Sigmoid colon (tissue), 7 donors: ENCODE measurements at regions of chr18 and their contacts with region 1.

Region 1: GRCh38 chr18:9708057-9708433 is at the start of gene RAB31:
- DNase-seq: peak; percentile 94
- H3K4me3 ChIP-seq: peak within 1 kb of the TSS; percentile 82 to 98 (median 88)
- H3K27ac ChIP-seq: peak within 1 kb of the TSS; percentile 93 to 98 (median 94)
- H3K4me1 ChIP-seq: peaks cover 0 to 49% (median 31%) of the 10 kb centered on the region in 4 donors
- H3K27me3 ChIP-seq: no peaks in the 10 kb centered on the region
- CTCF ChIP-seq: no peak
- EP300 ChIP-seq: no peak
- POLR2A ChIP-seq: no peak
- total RNA-seq, gene RAB31: 52.0 to 74.6 (median 65.9) TPM

Region 2: GRCh38 chr18:9771261-9771976 is 63.4 kb after region 1 on chr18:
- intact Hi-C with region 1: loop called (anchors 5 kb)
- DNase-seq: peak; percentile 90
- H3K4me3 ChIP-seq: no peak overlapping the region
- H3K27ac ChIP-seq: peak overlapping the region in 3 of 4 donors; percentile 18 to 57 (median 19)
- H3K4me1 ChIP-seq: peaks cover 0 to 37% (median 12%) of the 10 kb centered on the region in 4 donors
- H3K27me3 ChIP-seq: no peaks in the 10 kb centered on the region
- CTCF ChIP-seq: peak; percentile 83 to 96 (median 93)
- EP300 ChIP-seq: peak in 1 of 4 donors; percentile 68
- POLR2A ChIP-seq: no peak

Region 3: DNA sequence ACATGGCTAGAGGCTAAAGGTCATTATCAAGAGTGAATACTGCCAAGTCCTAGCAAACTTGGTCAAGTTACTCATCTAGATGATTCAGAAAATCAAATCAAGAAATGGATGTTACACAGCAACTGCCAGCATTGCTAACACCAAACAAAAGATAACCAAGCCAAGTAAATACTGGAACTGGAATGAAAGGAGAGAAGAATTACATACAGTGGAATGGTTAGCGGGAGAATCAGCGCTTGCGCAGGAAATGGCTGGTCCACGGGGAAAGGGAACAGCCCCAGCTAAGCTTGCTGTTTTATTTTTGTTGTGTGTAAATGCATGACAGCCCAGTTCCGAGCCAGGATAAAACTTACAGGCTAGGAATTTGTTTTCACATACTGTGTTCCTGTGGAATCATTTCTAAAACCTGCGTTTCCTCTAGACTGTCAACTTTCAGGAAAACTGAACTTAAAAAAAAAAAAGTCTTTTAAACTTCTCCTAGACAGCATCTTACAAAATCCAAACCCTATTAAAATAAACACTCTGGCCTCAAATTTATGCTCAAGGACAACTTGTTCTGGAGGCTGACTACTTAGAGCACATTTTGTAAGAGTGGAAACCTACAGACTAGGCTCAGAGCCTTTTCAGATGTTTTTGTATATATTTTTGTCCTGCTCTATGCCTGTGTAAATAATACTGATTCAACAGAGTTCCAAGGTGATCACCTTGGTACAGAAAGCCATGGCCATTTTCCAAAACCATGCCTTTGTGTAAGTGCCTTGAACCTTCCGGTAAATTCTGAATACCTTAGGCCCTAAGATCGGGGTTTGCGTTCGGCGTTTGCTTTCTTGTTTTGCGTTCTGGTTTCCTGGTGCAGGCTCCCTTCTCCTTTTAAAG is 147.0 kb after region 1 on chr18:
- intact Hi-C with region 1: loop called (anchors 2 kb)
- DNase-seq: peak; percentile 87
- H3K4me3 ChIP-seq: peak overlapping the region in 2 of 4 donors; percentile 5 to 20
- H3K27ac ChIP-seq: peak overlapping the region; percentile 78 to 89 (median 86)
- H3K4me1 ChIP-seq: peaks cover 0 to 38% (median 32%) of the 10 kb centered on the region in 4 donors
- H3K27me3 ChIP-seq: no peaks in the 10 kb centered on the region
- CTCF ChIP-seq: no peak
- EP300 ChIP-seq: peak; percentile 87 to 99 (median 92)
- POLR2A ChIP-seq: no peak

Region 4: DNA sequence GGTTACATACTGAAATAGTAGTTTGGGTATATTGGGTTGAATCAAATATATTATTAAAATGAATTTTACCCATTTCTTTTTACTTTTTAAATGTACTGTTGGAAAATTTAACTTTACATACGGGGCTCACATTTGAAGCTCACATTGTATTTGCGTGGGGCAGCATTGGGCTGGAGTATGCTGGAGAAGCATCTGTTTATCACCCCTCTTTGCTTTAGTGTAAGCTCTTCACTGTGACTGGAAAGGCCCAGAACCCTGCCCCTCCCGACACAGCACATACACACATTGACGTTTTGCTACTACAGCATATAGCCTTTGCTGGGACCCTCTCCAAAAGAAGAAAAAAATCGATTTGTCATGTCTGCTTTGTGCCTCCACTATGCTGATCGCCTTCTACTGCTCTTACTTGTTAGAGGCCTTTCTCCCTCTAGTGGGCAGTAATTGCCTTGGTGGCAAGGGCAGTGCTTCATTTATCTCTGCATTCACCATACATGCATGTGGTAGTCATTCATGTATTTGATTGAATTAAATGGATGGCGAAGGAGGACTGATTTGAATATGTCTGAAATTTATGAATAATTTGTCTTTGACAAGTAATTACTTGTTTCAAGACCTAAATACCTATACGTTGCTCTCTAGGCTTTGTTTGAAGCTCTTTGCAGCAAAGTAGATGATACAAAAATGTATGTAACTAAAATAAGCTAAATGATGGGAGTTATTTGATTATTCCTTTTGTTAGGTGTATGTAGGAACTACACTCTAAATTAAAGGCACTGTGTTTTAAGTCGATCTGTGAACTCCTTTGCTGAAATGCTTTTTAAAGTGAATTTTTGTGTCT is 243.2 kb after region 1 on chr18:
- intact Hi-C with region 1: loop called (anchors 5 kb)
- DNase-seq: no peak
- H3K4me3 ChIP-seq: no peak overlapping the region
- H3K27ac ChIP-seq: peak overlapping the region in 1 of 4 donors; percentile 9
- H3K4me1 ChIP-seq: peaks cover 0 to 35% (median 17%) of the 10 kb centered on the region in 4 donors
- H3K27me3 ChIP-seq: no peaks in the 10 kb centered on the region
- CTCF ChIP-seq: peak; percentile 11 to 78 (median 58)
- EP300 ChIP-seq: no peak
- POLR2A ChIP-seq: no peak